ENCODE measurements at regions of chr18 and their contacts with region 1.

Region 1: GRCh38 chr18:61901323-61901986 is 8.6 kb upstream of the RNF152 start:
- DNase-seq: peak in 1 of 2 donors; percentile 65
- H3K4me3 ChIP-seq: no peak overlapping the region
- H3K27ac ChIP-seq: no peak overlapping the region
- H3K4me1 ChIP-seq: peaks cover 0 to 6% of the 10 kb centered on the region in 2 donors
- H3K27me3 ChIP-seq: no peaks in the 10 kb centered on the region
- CTCF ChIP-seq: peak; percentile 71 to 93 (median 90)

Region 2: DNA sequence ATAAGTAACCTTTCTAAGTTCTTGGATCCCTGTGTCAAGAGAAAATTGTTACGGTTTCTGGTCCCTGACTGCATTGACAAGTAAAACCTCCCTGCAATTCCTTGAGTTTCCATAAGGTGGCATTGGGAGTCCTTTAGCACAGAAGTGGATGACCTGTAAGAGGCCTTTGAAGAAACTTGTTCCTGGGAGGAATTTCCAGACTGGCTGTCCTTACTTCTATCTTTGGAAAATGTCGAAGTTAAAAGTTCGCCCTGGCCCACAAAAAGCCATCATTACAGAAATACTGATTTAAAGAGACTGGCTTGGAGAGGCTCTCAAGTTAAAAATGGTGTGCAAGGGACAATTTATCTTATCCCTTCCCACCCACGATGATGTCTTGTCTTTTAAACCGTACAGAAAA is 349.9 kb before region 1 on chr18:
- intact Hi-C with region 1: loop called (anchors 1 kb)
- DNase-seq: no peak
- H3K4me3 ChIP-seq: no peak overlapping the region
- H3K27ac ChIP-seq: no peak overlapping the region
- H3K4me1 ChIP-seq: no peaks in the 10 kb centered on the region
- H3K27me3 ChIP-seq: no peaks in the 10 kb centered on the region
- CTCF ChIP-seq: peak; percentile 70 to 89 (median 77)